Mammary epithelial cell (primary cell): ENCODE measurements at regions of chr3 and their contacts with region 1.

Region 1: DNA sequence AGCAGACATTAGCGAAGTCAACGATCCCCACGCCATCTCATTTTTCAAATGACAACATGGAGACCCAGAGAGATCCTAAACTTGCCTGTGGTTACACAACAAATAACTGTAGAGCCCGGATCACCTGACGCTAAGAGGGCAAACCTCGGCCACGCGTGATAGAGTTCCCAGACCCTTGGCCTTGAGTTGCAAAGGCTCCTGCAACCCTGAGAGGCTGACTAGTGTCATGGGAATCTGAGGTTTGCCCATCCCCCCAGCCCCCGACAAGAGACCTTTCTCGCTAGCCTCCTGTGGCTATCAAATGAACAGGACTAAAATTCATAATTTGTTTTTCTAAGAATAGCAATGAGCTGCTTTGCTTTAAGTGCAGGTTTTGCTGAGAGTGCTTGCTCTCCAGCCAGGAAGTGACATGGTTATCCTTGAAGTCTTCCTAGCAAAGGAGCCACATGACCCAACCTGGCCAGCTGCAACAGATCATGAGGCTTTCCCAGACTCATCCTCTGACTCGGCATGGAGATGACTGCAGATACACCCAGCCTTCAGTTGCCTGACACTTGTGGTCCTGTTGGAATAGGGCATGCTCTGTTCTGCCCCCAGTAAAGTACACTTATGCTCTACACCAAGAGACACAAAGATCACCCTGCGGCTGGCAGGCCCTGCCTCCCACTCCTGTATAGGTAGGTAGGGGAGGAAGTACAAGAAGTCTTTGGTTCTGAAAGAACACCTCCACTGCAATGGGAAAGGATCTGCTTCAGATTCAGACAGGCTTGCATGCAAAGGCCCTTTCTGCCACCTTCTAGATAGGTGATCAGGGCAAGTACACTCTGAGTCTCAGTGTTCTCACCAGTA is 36.0 kb downstream of the MCF2L2 start:
- DNase-seq: peak; percentile 60
- H3K4me3 ChIP-seq: no peak overlapping the region
- H3K27ac ChIP-seq: no peak overlapping the region
- H3K4me1 ChIP-seq: peaks cover 2% of the 10 kb centered on the region
- H3K27me3 ChIP-seq: no peaks in the 10 kb centered on the region
- CTCF ChIP-seq: no peak

Region 2: GRCh38 chr3:183122257-183122932 is 270.0 kb before region 1 on chr3:
- CTCF ChIA-PET with region 1: no interaction called
- dilution Hi-C with region 1: no loop called
- in situ Hi-C with region 1: loop called (anchors 5 kb)
- intact Hi-C with region 1: no loop called
- DNase-seq: peak; percentile 28
- H3K4me3 ChIP-seq: no peak overlapping the region
- H3K27ac ChIP-seq: no peak overlapping the region
- H3K4me1 ChIP-seq: peaks cover 5% of the 10 kb centered on the region
- H3K27me3 ChIP-seq: no peaks in the 10 kb centered on the region
- CTCF ChIP-seq: peak; percentile 75 to 84

Region 3: GRCh38 chr3:183349421-183350157 is 42.8 kb before region 1 on chr3:
- CTCF ChIA-PET with region 1: no interaction called
- dilution Hi-C with region 1: no loop called
- in situ Hi-C with region 1: no loop called
- intact Hi-C with region 1: no loop called
- DNase-seq: no peak
- H3K4me3 ChIP-seq: no peak overlapping the region
- H3K27ac ChIP-seq: no peak overlapping the region
- H3K4me1 ChIP-seq: no peaks in the 10 kb centered on the region
- H3K27me3 ChIP-seq: no peaks in the 10 kb centered on the region
- CTCF ChIP-seq: no peak

Region 4: DNA sequence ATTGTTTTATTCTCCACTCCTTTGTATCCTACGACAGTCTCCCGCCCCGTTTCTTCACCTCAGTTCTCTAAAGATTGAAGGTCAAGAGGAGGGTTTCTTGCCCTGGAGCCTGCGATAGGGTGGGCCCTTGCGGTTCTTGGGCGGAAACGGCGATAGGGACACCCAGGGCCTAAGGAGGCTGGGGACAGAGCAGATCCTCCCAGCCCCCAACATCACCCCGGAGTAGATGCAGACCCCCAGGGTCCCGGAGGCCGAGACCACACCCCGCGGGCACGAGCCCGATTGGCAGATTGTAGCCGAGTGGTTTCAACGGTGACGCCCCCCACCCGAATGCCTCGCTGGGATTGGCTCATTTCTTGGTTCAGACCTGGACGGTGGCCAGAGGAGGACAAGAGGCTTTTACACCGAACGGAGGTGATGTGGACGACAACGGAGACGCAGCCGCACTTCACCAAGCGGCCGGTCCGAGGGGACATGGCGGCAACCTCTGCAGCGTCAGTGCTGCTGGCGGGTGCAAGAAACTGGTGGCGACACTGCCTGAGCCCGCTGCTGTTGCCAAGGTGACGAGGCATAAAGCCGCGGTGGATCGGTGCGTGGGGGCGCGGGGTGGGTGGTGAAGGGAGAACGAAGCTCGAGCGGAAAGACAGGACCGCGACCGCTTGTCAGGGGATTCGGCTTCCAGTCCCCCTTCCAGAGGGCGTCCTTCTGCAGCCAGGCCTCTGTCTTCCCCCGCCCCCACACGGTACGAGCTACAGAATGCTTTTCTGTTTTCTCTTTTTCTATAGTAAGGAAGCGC is 55.0 kb after region 1 on chr3:
- CTCF ChIA-PET with region 1: no interaction called
- dilution Hi-C with region 1: no loop called
- in situ Hi-C with region 1: no loop called
- intact Hi-C with region 1: no loop called
- DNase-seq: peak; percentile 84
- H3K4me3 ChIP-seq: peak overlapping the region; percentile 78 to 94 (median 87)
- H3K27ac ChIP-seq: peak overlapping the region; percentile 22
- H3K4me1 ChIP-seq: peaks cover 6% of the 10 kb centered on the region
- H3K27me3 ChIP-seq: no peaks in the 10 kb centered on the region
- CTCF ChIP-seq: peak in 1 of 2 donors; percentile 12

Region 5: DNA sequence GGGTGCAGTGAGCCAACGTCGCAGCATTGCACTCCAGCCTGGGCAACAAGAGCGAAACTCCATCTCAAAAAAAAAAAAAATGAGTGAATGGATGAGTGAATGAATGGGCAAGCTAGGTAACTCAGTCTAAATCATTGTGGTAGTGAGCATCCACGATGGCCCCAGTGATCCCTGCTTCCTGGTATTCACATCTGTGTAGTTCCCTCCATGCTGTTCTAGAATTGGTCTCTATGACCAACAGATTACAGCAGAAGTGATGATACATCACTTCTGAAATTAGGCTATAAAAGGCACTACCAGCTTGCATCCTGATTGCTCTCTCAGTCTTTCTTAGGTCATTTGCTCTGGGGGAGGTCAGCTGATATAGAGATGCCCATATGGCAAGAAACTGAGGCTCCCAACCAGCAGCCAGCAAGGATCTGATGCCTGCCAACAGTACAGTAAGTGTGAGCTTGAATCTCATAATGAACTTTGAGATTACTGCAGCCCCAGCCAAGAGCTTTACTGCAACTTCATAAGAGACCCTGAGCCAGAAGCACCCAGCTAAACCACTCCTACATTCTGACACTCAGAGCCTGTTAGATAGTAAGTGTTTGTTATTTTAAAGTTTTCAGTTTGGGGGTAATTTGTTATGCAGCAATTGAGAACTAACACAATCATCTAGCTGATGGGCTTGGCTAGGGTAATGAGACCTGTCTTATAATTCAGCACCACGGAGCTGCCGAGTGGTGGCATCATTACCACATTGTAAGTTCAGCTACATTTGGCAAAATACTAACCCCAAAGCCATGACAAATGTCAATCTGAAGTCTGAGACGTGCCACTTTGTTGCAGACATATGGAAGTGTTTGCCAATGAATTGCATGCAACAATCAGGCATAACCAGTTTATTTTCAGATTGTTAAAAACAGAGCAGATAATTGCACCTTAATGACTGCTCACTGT is 110.1 kb after region 1 on chr3:
- CTCF ChIA-PET with region 1: no interaction called
- dilution Hi-C with region 1: no loop called
- in situ Hi-C with region 1: no loop called
- intact Hi-C with region 1: no loop called
- DNase-seq: no peak
- H3K4me3 ChIP-seq: no peak overlapping the region
- H3K27ac ChIP-seq: no peak overlapping the region
- H3K4me1 ChIP-seq: no peaks in the 10 kb centered on the region
- H3K27me3 ChIP-seq: no peaks in the 10 kb centered on the region
- CTCF ChIP-seq: peak; percentile 8 to 38

Region 6: GRCh38 chr3:183548262-183548769 is 155.9 kb after region 1 on chr3:
- CTCF ChIA-PET with region 1: no interaction called
- dilution Hi-C with region 1: no loop called
- in situ Hi-C with region 1: no loop called
- intact Hi-C with region 1: no loop called
- DNase-seq: peak; percentile 88
- H3K4me3 ChIP-seq: no peak overlapping the region
- H3K27ac ChIP-seq: no peak overlapping the region
- H3K4me1 ChIP-seq: peaks cover 10% of the 10 kb centered on the region
- H3K27me3 ChIP-seq: no peaks in the 10 kb centered on the region
- CTCF ChIP-seq: no peak